MCF 10A (cell line): ENCODE measurements at regions of chr6 and their contacts with region 1.

Region 1: GRCh38 chr6:124400261-124400999 is 561.8 kb upstream of the RNF217 start:
- DNase-seq: peak; percentile 25
- H3K4me3 Mint-ChIP-seq: no peak overlapping the region
- H3K27ac Mint-ChIP-seq: no peak overlapping the region
- H3K4me1 Mint-ChIP-seq: peaks cover 6% of the 10 kb centered on the region
- H3K27me3 Mint-ChIP-seq: no peaks in the 10 kb centered on the region
- CTCF ChIP-seq: peak; percentile 21

Region 2: DNA sequence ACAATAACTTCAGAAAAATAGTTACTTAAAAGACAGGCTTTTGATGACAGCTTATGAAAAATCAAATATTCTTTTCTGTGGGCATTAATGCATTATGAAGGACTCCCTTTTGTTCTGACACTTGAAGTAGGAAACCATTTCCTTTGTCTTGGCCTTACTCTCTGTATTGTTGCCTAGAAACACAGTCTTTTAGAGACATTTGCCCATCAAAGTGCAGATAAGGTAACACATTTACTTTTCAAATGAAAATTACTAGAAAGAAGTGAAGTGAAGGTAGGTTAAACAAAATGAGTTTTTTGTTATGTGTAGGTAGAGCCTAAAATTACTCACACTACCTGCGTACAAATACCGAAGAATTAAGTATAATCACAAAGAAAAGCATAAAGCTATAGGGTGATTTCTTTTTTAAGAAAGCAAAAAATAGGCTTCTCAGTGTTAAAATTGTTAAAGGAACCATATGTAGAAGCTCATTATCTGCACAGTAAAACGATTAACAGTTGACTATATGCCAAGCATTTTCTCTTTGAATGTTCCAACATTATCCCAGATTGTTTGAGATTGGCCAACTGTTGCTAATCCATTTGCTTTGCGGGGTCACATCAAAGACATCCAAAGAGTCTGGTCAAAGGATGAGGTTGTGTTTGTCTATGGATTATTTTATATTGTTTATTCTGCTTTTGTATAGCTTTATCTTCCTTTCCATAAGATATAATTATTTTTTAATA is 19.8 kb after region 1 on chr6:
- CTCF ChIA-PET with region 1: no interaction called
- POLR2A ChIA-PET with region 1: no interaction called
- intact Hi-C with region 1: no loop called
- DNase-seq: no peak
- H3K4me3 Mint-ChIP-seq: no peak overlapping the region
- H3K27ac Mint-ChIP-seq: no peak overlapping the region
- H3K4me1 Mint-ChIP-seq: peaks cover 8% of the 10 kb centered on the region
- H3K27me3 Mint-ChIP-seq: no peaks in the 10 kb centered on the region
- CTCF ChIP-seq: no peak

Region 3: DNA sequence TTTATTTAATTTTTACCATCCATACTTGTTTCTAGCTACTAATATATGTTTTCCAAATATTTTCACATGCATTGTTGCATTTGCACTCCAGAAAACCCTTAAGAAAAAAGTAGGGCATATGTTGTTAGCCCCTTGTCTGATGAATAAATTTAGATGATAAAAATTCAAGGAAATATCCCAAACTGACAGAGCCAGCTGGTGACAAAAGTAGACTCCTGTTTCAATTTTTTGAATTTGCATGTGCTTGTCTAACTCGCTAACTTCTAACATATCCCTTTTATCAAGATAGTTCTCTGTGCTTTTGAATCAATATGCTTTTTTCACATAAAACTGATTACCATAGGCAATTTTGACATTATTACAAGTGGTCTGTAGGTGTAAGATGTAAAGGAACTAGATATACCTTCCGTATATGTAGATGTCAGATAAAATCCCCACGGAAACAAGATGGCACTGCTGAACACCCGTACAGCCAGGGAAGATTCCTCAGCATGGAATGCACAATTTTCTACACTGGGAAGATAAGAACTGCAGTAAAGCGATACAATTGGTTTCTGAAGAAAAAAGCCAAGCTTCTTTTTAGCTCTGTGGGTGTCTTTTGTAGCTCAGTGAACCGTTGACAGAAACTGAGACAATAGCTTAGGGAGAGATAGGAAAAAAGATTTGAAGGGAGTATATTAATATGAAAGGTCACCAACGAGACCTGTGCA is 124.2 kb after region 1 on chr6:
- CTCF ChIA-PET with region 1: no interaction called
- POLR2A ChIA-PET with region 1: no interaction called
- intact Hi-C with region 1: no loop called
- DNase-seq: no peak
- H3K4me3 Mint-ChIP-seq: no peak overlapping the region
- H3K27ac Mint-ChIP-seq: no peak overlapping the region
- H3K4me1 Mint-ChIP-seq: no peaks in the 10 kb centered on the region
- H3K27me3 Mint-ChIP-seq: no peaks in the 10 kb centered on the region
- CTCF ChIP-seq: no peak

Region 4: DNA sequence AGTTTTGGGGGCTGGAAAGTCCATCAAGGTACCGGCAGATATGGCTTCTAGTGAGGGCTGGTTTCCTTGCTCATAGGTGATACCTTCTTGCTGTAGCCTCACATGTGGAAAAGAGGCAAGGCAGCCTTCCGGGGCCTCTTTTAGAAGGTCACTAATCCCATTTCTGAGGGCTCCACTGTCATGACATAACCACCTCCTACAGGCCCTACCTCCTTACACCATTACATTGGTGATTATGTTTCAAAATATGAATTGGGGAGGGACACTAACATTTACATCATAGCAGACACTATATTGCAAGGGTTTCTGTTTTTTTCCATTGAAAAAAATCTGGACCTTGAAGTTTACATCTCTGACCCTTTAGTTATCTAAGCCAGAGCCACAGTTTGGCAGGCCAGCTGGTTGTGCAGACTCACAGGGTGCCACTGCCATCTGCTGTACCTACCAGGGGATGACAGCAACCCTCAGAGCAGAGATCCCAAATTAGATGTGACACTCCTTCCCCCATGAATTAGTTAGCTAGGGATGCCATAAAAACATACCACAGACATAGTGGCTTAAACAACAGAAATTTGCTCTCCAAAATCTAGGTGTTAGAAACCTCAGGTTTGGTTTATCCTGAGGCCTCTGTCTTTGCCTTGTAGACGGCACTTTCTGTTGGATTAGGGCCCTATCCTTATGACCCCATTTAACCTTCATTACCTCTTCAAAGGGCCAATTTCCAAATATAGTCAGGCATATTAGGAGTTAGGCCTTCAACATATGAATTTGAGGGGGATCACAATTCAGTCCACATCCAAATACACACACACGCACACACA is 395.4 kb after region 1 on chr6:
- CTCF ChIA-PET with region 1: interaction called, 3 read pairs
- POLR2A ChIA-PET with region 1: no interaction called
- intact Hi-C with region 1: loop called (anchors 1 kb)
- DNase-seq: peak; percentile 52
- H3K4me3 Mint-ChIP-seq: no peak overlapping the region
- H3K27ac Mint-ChIP-seq: no peak overlapping the region
- H3K4me1 Mint-ChIP-seq: peaks cover 16% of the 10 kb centered on the region
- H3K27me3 Mint-ChIP-seq: no peaks in the 10 kb centered on the region
- CTCF ChIP-seq: peak; percentile 85

Region 5: DNA sequence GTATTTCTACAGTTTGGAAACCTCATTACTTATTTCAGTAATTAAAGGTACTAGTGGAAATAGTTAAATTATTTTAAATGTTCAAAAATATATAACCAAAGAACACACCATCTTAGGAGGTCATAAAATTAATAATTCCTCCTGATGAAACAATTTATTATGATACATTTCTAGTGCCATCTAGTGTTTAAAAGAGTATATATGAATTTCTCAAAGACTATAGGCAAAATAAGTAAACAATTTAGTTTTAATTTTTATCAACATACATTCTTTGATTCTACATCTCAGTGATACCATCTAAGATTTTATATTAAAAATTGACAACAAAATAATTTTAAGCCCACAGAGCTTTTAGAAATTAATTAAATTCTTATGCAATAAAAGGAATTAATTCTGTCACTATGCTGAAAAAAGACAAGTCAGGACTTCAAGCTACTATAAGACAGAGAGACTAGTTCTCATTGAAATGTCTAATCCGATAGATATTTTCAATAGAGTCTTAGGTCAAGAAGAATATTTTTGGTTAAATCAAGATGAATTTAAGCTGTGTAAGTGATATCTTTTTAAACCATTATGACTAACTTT is 454.0 kb after region 1 on chr6:
- CTCF ChIA-PET with region 1: no interaction called
- POLR2A ChIA-PET with region 1: no interaction called
- intact Hi-C with region 1: loop called (anchors 5 kb)
- DNase-seq: peak; percentile 11
- H3K4me3 Mint-ChIP-seq: no peak overlapping the region
- H3K27ac Mint-ChIP-seq: no peak overlapping the region
- H3K4me1 Mint-ChIP-seq: no peaks in the 10 kb centered on the region
- H3K27me3 Mint-ChIP-seq: no peaks in the 10 kb centered on the region
- CTCF ChIP-seq: peak; percentile 38